Common myeloid progenitor, CD34-positive (primary cell): ENCODE measurements at regions of chr14 and their contacts with region 1.

Region 1: GRCh38 chr14:21498553-21499526 is 12.3 kb downstream of the METTL3 start:
- DNase-seq: peak; percentile 68 to 87 (median 82)
- H3K4me3 ChIP-seq: no peak overlapping the region
- H3K27ac ChIP-seq: no peak overlapping the region
- H3K4me1 ChIP-seq: no peaks in the 10 kb centered on the region
- H3K27me3 ChIP-seq: no peaks in the 10 kb centered on the region

Region 2: GRCh38 chr14:21455911-21456667 is 42.8 kb before region 1 on chr14 and contains the start of gene CHD8:
- CTCF ChIA-PET with region 1: no interaction called
- POLR2A ChIA-PET with region 1: no interaction called
- DNase-seq: peak; percentile 100
- H3K4me3 ChIP-seq: peak within 1 kb of the TSS; percentile 81 to 99 (median 96)
- H3K27ac ChIP-seq: peak within 1 kb of the TSS; percentile 94 to 98
- H3K4me1 ChIP-seq: peaks cover 7 to 14% (median 10%) of the 10 kb centered on the region in 4 experiments
- H3K27me3 ChIP-seq: no peaks in the 10 kb centered on the region

Region 3: GRCh38 chr14:21476925-21477681 is 21.7 kb before region 1 on chr14 and contains the starts of genes RAB2B and TOX4:
- CTCF ChIA-PET with region 1: interaction called, 21 read pairs
- POLR2A ChIA-PET with region 1: interaction called, 3 read pairs
- DNase-seq: peak; percentile 99
- H3K4me3 ChIP-seq: peak within 1 kb of the TSS; percentile 82 to 100 (median 98)
- H3K27ac ChIP-seq: peak within 1 kb of the TSS; percentile 95 to 97
- H3K4me1 ChIP-seq: peaks cover 12 to 19% (median 15%) of the 10 kb centered on the region in 4 experiments
- H3K27me3 ChIP-seq: no peaks in the 10 kb centered on the region

Region 4: GRCh38 chr14:21486640-21487087 is 12.2 kb before region 1 on chr14:
- CTCF ChIA-PET with region 1: interaction called, 21 read pairs
- POLR2A ChIA-PET with region 1: no interaction called
- DNase-seq: no peak
- H3K4me3 ChIP-seq: no peak overlapping the region
- H3K27ac ChIP-seq: no peak overlapping the region
- H3K4me1 ChIP-seq: no peaks in the 10 kb centered on the region
- H3K27me3 ChIP-seq: no peaks in the 10 kb centered on the region

Region 5: DNA sequence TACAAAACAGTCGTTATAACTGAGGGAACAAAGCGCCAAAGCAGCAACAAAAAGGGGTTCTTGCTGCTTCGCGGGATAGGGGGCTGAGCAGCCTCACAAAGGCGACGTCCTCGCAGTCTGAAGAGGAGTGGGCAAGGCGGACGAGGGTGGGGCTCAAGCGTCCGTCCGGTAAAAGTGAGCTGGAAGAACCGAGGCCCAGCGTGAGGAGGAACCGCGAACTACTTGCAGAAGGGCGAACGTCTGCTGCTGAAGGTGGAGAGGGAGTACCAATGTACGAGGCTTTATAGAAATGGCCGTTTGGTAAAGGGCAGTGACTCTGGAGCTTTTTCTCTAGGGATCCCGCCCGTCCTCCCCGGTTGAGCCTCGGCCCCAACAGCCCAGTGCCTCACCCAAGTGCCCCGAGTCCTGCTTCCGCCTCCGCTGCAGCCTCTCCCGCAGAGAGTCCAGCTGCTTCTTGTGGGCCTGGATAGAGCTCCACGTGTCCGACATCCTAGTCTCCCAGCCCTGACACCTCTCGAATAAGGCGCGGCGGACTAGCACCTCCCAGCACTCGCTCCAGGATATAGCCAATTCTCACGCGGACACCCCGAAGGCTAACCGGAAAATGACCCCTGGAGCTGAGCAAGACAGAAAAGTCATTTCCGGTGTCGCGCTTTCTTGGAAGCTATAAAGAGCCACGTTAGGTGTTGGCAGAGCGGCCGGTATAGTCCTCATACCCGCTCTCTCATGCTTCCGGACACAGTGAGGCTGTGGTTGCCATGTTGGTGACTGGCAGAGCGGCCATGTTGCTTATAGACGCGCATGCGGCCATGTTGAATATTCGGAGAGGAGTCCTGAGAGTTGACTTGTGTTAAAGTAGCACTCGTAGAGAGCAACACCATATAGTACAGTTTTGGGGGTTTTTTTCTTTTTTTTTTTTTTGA is 12.2 kb after region 1 on chr14 and contains the start of gene METTL3:
- CTCF ChIA-PET with region 1: interaction called, 51 read pairs
- POLR2A ChIA-PET with region 1: interaction called, 12 read pairs
- DNase-seq: peak; percentile 95 to 97 (median 97)
- H3K4me3 ChIP-seq: peak within 1 kb of the TSS; percentile 66 to 100 (median 98)
- H3K27ac ChIP-seq: peak within 1 kb of the TSS; percentile 82 to 89
- H3K4me1 ChIP-seq: peaks cover 9 to 24% (median 15%) of the 10 kb centered on the region in 4 experiments
- H3K27me3 ChIP-seq: no peaks in the 10 kb centered on the region

Region 6: GRCh38 chr14:21528381-21529348 is 29.8 kb after region 1 on chr14:
- CTCF ChIA-PET with region 1: interaction called, 10 read pairs
- POLR2A ChIA-PET with region 1: interaction called, 3 read pairs
- DNase-seq: peak in 1 of 3 donors; percentile 25
- H3K4me3 ChIP-seq: no peak overlapping the region
- H3K27ac ChIP-seq: no peak overlapping the region
- H3K4me1 ChIP-seq: peaks cover 2 to 22% (median 13%) of the 10 kb centered on the region in 4 experiments
- H3K27me3 ChIP-seq: peaks cover 0 to 1% (median 0%) of the 10 kb centered on the region in 5 experiments

Region 7: DNA sequence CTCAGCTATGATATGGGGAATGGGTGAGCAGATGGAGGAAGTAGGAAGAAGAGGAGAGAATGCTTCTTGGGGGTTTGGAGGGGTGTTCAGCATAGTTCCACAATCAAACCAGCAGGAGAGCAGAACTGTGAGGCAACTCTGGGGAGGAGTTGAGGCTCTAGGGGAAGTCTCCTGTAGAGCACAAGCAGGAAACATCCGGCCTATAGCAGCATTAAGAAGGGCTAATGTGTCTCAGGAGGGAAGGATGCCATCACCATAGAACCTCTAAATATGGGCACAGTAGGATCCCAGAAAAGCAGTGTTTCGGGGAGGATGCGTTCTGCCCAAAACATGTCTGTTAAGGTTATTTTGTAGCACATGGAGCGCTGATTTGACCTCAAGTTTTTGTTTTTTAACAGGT is 35.7 kb after region 1 on chr14:
- CTCF ChIA-PET with region 1: interaction called, 10 read pairs
- POLR2A ChIA-PET with region 1: no interaction called
- DNase-seq: peak in 2 of 3 donors; percentile 42 to 47
- H3K4me3 ChIP-seq: no peak overlapping the region
- H3K27ac ChIP-seq: no peak overlapping the region
- H3K4me1 ChIP-seq: peaks cover 2 to 11% (median 7%) of the 10 kb centered on the region in 4 experiments
- H3K27me3 ChIP-seq: peaks cover 10 to 52% (median 18%) of the 10 kb centered on the region in 5 experiments

Region 8: DNA sequence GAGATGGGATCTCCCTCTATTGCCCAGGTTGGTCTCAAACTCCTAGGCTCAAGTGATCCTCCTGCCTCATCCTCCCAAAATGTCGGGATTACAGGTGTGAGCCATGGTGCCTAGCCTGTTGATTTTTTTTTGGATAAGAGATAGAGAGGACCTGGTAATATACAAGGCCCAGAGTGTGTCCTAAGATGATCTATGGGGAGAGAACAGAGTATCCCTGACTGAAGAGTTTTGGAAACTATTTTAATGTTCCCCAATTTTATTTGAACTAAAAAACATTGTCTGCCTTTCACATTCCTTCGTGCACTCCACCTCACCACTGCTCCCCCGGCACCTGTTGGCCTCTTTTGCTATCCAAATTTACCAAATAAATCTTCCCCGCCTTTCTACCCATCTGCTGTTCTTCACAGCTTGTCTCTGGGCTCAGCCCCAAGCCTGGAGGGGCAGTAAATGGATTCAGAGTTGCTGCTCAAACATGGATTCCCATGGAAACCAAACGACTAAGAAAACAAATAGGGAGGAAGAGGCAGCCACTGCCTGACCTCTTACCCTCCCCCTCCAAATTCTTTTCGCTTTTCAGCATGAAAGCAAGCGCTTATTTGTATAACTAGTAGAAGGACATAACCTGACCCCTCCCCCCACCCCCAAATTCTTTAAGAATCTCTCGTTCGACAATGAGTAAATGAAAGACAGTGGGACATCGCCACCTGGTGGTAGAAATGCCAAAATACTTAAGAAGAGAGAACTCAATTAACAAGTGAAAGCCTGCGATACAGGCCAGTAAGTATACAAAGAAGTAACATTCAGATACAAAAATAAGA is 58.5 kb after region 1 on chr14:
- CTCF ChIA-PET with region 1: interaction called, 130 read pairs
- POLR2A ChIA-PET with region 1: interaction called, 4 read pairs
- DNase-seq: peak; percentile 92 to 96 (median 93)
- H3K4me3 ChIP-seq: peak overlapping the region in 6 of 7 experiments; percentile 36 to 75 (median 51)
- H3K27ac ChIP-seq: peak overlapping the region; percentile 36 to 80
- H3K4me1 ChIP-seq: peaks cover 0 to 6% (median 2%) of the 10 kb centered on the region in 4 experiments
- H3K27me3 ChIP-seq: peaks cover 0 to 2% (median 0%) of the 10 kb centered on the region in 5 experiments

Region 9: DNA sequence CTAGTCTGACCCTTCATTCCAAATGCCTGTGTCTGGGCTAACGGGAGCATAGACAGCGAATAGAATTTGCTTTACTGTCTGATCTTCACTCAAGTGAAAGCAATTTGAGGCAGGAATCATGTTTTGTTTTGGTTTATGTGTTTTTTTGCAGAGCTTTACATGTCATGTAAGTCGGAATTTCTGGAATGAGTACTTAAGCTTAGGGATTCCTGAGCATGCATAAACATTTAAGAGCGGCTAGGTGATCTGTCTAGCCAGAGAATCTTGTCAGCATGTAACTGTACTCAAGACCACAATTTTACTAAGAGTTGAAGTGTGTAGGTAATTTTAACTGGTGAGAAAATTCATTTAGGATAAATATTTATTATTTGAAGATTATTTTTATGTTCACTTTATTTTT is 522.9 kb after region 1 on chr14:
- CTCF ChIA-PET with region 1: no interaction called
- POLR2A ChIA-PET with region 1: no interaction called
- DNase-seq: no peak
- H3K4me3 ChIP-seq: no peak overlapping the region
- H3K27ac ChIP-seq: no peak overlapping the region
- H3K4me1 ChIP-seq: peaks cover 0 to 4% (median 0%) of the 10 kb centered on the region in 4 experiments
- H3K27me3 ChIP-seq: no peaks in the 10 kb centered on the region